ENCODE measurements at regions of chr11 and their contacts with region 1.

Region 1: GRCh38 chr11:63838678-63839507 is at the start of gene MARK2:
- DNase-seq: peak; percentile 98 to 100 (median 100)
- ATAC-seq: peak; percentile 83
- H3K4me3 ChIP-seq: peak within 1 kb of the TSS; percentile 76 to 93
- H3K4me3 Mint-ChIP-seq: peak within 1 kb of the TSS; percentile 91
- H3K27ac ChIP-seq: peak within 1 kb of the TSS; percentile 75 to 77
- H3K27ac Mint-ChIP-seq: peak within 1 kb of the TSS; percentile 86
- H3K4me1 ChIP-seq: peaks cover 40% of the 10 kb centered on the region
- H3K4me1 Mint-ChIP-seq: peaks cover 55% of the 10 kb centered on the region
- H3K27me3 ChIP-seq: no peaks in the 10 kb centered on the region
- H3K27me3 Mint-ChIP-seq: no peaks in the 10 kb centered on the region
- CTCF ChIP-seq: no peak
- total RNA-seq, gene MARK2: 16.9 to 19.1 TPM

Region 2: DNA sequence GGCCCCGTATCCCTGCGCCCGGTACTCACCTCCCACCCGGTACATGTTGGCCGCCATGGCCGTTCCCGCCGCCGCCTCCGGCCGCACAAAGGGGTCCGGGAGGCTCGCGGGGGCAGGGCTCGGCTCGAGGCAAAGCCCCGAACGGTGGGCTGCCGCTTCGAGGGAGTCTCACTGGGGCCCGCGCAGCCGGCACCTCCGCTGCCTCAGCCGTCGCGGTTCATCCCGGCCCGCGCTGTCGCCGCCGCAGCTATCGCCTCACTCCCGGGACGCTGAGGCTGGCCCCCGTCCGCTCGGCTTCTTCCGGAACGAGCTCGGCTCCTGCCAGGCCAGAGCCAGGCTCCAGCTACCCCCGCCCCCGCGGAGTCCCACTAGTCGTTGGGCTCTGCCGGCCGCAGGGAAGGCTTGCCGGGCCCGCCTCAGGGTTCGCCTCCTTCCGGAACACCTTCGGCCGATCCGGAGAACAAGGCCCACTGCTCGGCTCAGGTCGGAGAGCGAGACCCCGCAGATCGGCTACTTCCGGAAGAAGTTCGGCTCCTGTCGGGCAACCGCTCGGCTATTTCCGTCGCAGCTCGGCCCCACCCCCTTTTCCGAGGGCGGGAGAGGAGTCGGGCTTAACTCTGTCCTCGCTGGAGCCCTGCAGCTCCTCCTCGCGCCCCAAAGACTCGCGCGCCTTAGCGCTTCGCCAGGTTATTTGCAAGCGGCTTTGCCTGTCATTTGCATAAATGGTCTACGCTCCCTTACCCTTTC is 1237.3 kb before region 1 on chr11 and contains the start of gene MTA2:
- CTCF ChIA-PET with region 1: no interaction called
- POLR2A ChIA-PET with region 1: no interaction called
- intact Hi-C with region 1: loop called in 1 of 2 experiments (anchors 5 kb)
- DNase-seq: peak; percentile 98 to 100 (median 99)
- ATAC-seq: peak; percentile 77
- H3K4me3 ChIP-seq: peak within 1 kb of the TSS; percentile 62 to 98
- H3K4me3 Mint-ChIP-seq: peak within 1 kb of the TSS; percentile 89
- H3K27ac ChIP-seq: peak within 1 kb of the TSS; percentile 83 to 86
- H3K27ac Mint-ChIP-seq: peak within 1 kb of the TSS; percentile 92
- H3K4me1 ChIP-seq: peaks cover 22% of the 10 kb centered on the region
- H3K4me1 Mint-ChIP-seq: peaks cover 57% of the 10 kb centered on the region
- H3K27me3 ChIP-seq: no peaks in the 10 kb centered on the region
- H3K27me3 Mint-ChIP-seq: no peaks in the 10 kb centered on the region
- CTCF ChIP-seq: no peak
- total RNA-seq, gene MTA2: 148 to 154 TPM

Region 3: DNA sequence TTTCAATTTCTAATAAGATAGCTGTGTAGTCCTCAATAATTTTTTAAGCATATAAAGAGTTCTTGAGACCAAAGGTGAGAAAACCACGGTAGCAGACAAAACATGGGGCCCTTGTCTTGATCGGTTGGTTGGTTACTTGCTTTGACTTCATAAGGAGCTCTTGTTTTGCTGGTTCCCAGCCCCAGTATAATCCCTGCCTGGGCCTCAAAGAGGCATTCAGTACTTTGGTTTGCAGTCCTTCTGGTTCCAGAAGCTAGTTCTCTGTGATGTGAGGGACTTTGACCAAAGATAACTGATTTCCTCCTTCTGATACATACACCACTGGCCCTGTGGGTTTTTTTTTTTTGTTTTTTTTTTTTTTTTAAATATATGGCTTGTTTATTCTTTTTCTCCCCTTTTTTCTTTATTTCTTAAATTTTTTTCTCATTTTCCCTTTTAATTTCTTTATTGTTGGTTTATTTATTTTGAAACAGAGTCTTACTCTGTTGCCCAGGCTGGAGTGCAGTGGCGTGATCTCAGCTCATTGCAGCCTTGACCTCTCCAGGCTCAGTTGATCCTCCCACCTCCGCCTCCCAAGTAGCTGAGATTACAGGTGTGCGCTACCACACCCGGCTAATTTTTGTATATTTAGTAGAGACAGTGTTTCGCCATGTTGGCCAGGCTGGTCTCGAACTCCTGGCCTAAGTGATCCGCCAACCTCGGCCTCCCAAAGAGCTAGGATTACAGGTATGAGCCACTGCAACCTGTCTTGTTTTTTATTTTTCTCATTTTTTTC is 17.3 kb after region 1 on chr11:
- CTCF ChIA-PET with region 1: interaction called, 92 read pairs
- POLR2A ChIA-PET with region 1: interaction called, 10 read pairs
- intact Hi-C with region 1: no loop called
- DNase-seq: peak in 2 of 9 experiments; percentile 53 to 66
- ATAC-seq: peak; percentile 44
- H3K4me3 ChIP-seq: no peak overlapping the region
- H3K4me3 Mint-ChIP-seq: no peak overlapping the region
- H3K27ac ChIP-seq: peak overlapping the region in 1 of 2 experiments; percentile 47
- H3K27ac Mint-ChIP-seq: peak overlapping the region; percentile 83
- H3K4me1 ChIP-seq: peaks cover 19% of the 10 kb centered on the region
- H3K4me1 Mint-ChIP-seq: peaks cover 57% of the 10 kb centered on the region
- H3K27me3 ChIP-seq: no peaks in the 10 kb centered on the region
- H3K27me3 Mint-ChIP-seq: no peaks in the 10 kb centered on the region
- CTCF ChIP-seq: no peak

Region 4: GRCh38 chr11:63896071-63896470 is 57.2 kb after region 1 on chr11:
- CTCF ChIA-PET with region 1: interaction called, 60 read pairs
- POLR2A ChIA-PET with region 1: interaction called, 4 read pairs
- intact Hi-C with region 1: loop called in 1 of 2 experiments (anchors 1 kb)
- DNase-seq: no peak
- ATAC-seq: no peak
- H3K4me3 ChIP-seq: no peak overlapping the region
- H3K4me3 Mint-ChIP-seq: no peak overlapping the region
- H3K27ac ChIP-seq: no peak overlapping the region
- H3K27ac Mint-ChIP-seq: peak overlapping the region; percentile 64
- H3K4me1 ChIP-seq: peaks cover 23% of the 10 kb centered on the region
- H3K4me1 Mint-ChIP-seq: peaks cover 42% of the 10 kb centered on the region
- H3K27me3 ChIP-seq: no peaks in the 10 kb centered on the region
- H3K27me3 Mint-ChIP-seq: no peaks in the 10 kb centered on the region
- CTCF ChIP-seq: no peak

Region 5: GRCh38 chr11:63945477-63946163 is 106.7 kb after region 1 on chr11:
- CTCF ChIA-PET with region 1: interaction called, 337 read pairs
- POLR2A ChIA-PET with region 1: interaction called, 7 read pairs
- intact Hi-C with region 1: loop called (anchors 1 kb)
- DNase-seq: peak in 6 of 9 experiments; percentile 28 to 71 (median 58)
- ATAC-seq: peak; percentile 89
- H3K4me3 ChIP-seq: no peak overlapping the region
- H3K4me3 Mint-ChIP-seq: no peak overlapping the region
- H3K27ac ChIP-seq: no peak overlapping the region
- H3K27ac Mint-ChIP-seq: no peak overlapping the region
- H3K4me1 ChIP-seq: peaks cover under 1% of the 10 kb centered on the region
- H3K4me1 Mint-ChIP-seq: peaks cover 14% of the 10 kb centered on the region
- H3K27me3 ChIP-seq: no peaks in the 10 kb centered on the region
- H3K27me3 Mint-ChIP-seq: no peaks in the 10 kb centered on the region
- CTCF ChIP-seq: peak; percentile 62

Region 6: GRCh38 chr11:64000026-64000739 is 161.3 kb after region 1 on chr11:
- CTCF ChIA-PET with region 1: interaction called, 19 read pairs
- POLR2A ChIA-PET with region 1: no interaction called
- intact Hi-C with region 1: loop called in 1 of 2 experiments (anchors 1 kb)
- DNase-seq: peak; percentile 45 to 88 (median 70)
- ATAC-seq: peak; percentile 79
- H3K4me3 ChIP-seq: peak overlapping the region; percentile 24 to 33
- H3K4me3 Mint-ChIP-seq: peak overlapping the region; percentile 56
- H3K27ac ChIP-seq: no peak overlapping the region
- H3K27ac Mint-ChIP-seq: no peak overlapping the region
- H3K4me1 ChIP-seq: peaks cover 17% of the 10 kb centered on the region
- H3K4me1 Mint-ChIP-seq: peaks cover 9% of the 10 kb centered on the region
- H3K27me3 ChIP-seq: no peaks in the 10 kb centered on the region
- H3K27me3 Mint-ChIP-seq: peaks cover 2% of the 10 kb centered on the region
- CTCF ChIP-seq: peak; percentile 82

Region 7: GRCh38 chr11:64048042-64048854 is 209.4 kb after region 1 on chr11:
- CTCF ChIA-PET with region 1: no interaction called
- POLR2A ChIA-PET with region 1: no interaction called
- intact Hi-C with region 1: no loop called
- DNase-seq: no peak
- ATAC-seq: no peak
- H3K4me3 ChIP-seq: no peak overlapping the region
- H3K4me3 Mint-ChIP-seq: no peak overlapping the region
- H3K27ac ChIP-seq: no peak overlapping the region
- H3K27ac Mint-ChIP-seq: no peak overlapping the region
- H3K4me1 ChIP-seq: no peaks in the 10 kb centered on the region
- H3K4me1 Mint-ChIP-seq: no peaks in the 10 kb centered on the region
- H3K27me3 ChIP-seq: no peaks in the 10 kb centered on the region
- H3K27me3 Mint-ChIP-seq: no peaks in the 10 kb centered on the region
- CTCF ChIP-seq: no peak